GM10248 (cell line): ENCODE measurements at regions of chr18 and their contacts with region 1.

Region 1: GRCh38 chr18:644395-645004 is 13.0 kb upstream of the TYMS start:
- DNase-seq: no peak
- CTCF ChIP-seq: no peak

Region 2: GRCh38 chr18:623761-624620 is 20.5 kb before region 1 on chr18:
- CTCF ChIA-PET with region 1: interaction called, 48 read pairs
- POLR2A ChIA-PET with region 1: no interaction called
- DNase-seq: peak; percentile 55
- CTCF ChIP-seq: peak; percentile 73

Region 3: GRCh38 chr18:629269-630150 is 15.0 kb before region 1 on chr18:
- CTCF ChIA-PET with region 1: interaction called, 48 read pairs
- POLR2A ChIA-PET with region 1: no interaction called
- DNase-seq: no peak
- CTCF ChIP-seq: no peak

Region 4: DNA sequence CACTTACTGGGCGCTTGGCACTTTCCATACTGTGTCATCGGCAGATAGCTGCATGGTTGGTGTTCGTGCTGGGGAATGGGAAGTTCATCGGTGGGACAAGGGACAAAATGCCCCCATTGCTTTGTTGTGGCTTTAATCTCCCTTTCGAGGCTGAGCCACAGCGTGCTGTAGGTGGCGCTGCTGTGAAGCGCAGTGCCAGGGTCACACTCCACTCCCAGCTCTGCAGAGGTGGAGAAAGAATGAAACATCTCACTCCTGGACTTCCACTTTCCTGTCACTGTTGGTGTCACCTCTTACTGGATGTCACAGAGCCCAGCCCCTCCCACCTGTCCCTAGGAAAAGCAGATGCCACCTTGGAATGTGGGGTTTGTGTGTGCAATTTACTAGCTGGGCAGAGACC is 21.7 kb after region 1 on chr18:
- CTCF ChIA-PET with region 1: no interaction called
- POLR2A ChIA-PET with region 1: no interaction called
- DNase-seq: no peak
- CTCF ChIP-seq: peak; percentile 24